ENCODE measurements at regions of chr11 and their contacts with region 1.

Region 1: GRCh38 chr11:79382301-79383050 is 58.4 kb downstream of the TENM4 start:
- DNase-seq: no peak
- H3K4me3 ChIP-seq: no peak overlapping the region
- H3K27ac ChIP-seq: no peak overlapping the region
- H3K4me1 ChIP-seq: no peaks in the 10 kb centered on the region
- H3K27me3 ChIP-seq: no peaks in the 10 kb centered on the region
- CTCF ChIP-seq: no peak
- POLR2A ChIP-seq: no peak

Region 2: DNA sequence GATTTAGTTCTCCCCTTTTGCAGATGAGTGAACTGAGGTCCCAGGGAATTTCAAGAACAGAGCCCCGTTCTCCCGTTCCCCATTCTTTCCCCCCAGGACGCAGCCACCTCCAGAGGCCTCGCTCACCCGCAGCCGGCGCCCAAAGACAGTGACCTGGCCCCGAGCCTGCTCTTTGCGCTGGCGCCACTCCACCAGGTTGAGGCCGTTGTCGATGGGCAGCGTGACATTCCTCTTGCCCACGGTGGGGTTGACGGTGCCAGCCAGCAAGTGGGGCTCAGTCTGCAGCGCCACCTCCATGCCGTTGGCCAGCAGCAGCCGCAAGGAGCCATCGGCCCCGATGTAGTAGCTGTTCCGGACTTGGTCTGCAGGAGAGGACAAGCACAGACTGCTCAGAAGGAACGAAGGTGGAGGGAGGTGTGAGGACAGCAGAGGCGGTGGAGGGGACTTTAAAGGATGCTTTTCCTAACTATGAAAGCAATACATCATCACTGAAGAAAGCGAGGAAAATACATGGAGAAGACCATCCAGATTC is 706.4 kb before region 1 on chr11:
- intact Hi-C with region 1: no loop called
- DNase-seq: no peak
- H3K4me3 ChIP-seq: no peak overlapping the region
- H3K27ac ChIP-seq: no peak overlapping the region
- H3K4me1 ChIP-seq: no peaks in the 10 kb centered on the region
- H3K27me3 ChIP-seq: no peaks in the 10 kb centered on the region
- CTCF ChIP-seq: no peak
- POLR2A ChIP-seq: no peak

Region 3: DNA sequence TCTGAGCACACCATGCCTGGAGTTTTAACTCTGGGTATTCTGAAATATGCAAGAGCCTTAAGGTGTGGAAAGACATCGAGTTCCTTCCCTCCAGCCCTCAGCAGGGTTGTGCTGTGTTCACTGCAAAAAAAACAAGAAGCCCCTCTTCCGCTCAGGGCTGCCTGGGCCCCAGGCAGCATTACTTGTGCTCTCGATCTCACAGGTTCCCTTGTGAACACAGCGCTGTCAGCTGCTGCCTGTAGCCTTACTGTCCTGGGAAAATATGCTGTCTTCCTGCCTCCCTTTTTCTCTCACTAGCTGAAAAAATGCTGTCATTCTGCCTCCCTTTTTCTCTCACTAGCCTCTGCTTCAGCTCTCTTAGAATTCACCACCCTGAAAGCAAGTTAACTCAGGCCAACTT is 74.0 kb after region 1 on chr11:
- intact Hi-C with region 1: loop called (anchors 2 kb)
- DNase-seq: no peak
- H3K4me3 ChIP-seq: no peak overlapping the region
- H3K27ac ChIP-seq: no peak overlapping the region
- H3K4me1 ChIP-seq: no peaks in the 10 kb centered on the region
- H3K27me3 ChIP-seq: peaks cover 0 to 13% of the 10 kb centered on the region in 2 donors
- CTCF ChIP-seq: no peak
- POLR2A ChIP-seq: no peak